RWPE1 (cell line): ENCODE measurements at regions of chr12 and their contacts with region 1.

Region 1: GRCh38 chr12:57452937-57453509 is 2.1 kb upstream of the INHBE start:
- DNase-seq: peak; percentile 53
- H3K27ac ChIP-seq: no peak overlapping the region
- CTCF ChIP-seq: peak; percentile 91

Region 2: GRCh38 chr12:57268264-57268663 is 184.8 kb before region 1 on chr12:
- CTCF ChIA-PET with region 1: interaction called, 19 read pairs
- POLR2A ChIA-PET with region 1: no interaction called
- DNase-seq: no peak
- H3K27ac ChIP-seq: no peak overlapping the region
- CTCF ChIP-seq: no peak

Region 3: GRCh38 chr12:57309420-57309819 is 143.6 kb before region 1 on chr12:
- CTCF ChIA-PET with region 1: interaction called, 18 read pairs
- POLR2A ChIA-PET with region 1: no interaction called
- DNase-seq: peak; percentile 34
- H3K27ac ChIP-seq: no peak overlapping the region
- CTCF ChIP-seq: no peak

Region 4: GRCh38 chr12:57441846-57442427 is 11.1 kb before region 1 on chr12:
- CTCF ChIA-PET with region 1: interaction called, 12 read pairs
- POLR2A ChIA-PET with region 1: no interaction called
- DNase-seq: no peak
- H3K27ac ChIP-seq: no peak overlapping the region
- CTCF ChIP-seq: no peak

Region 5: DNA sequence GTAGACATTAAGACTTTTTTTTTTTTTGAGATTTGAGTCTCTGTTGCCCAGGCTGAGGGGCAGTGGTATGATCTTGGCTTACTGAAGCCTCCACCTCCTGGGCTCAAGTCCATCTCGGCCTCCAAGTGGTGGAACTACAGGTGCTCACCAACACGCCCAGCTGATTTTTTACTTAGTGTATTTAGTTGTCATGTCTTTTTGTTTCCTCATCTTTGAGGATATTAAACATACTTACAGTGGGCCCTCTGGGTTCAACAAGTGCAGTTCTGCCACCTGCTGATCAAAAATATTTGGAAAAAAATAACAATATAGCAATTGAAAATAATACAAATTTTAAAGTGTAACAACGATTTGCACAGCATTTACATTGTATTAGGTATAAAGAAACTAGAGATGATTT is 184.3 kb after region 1 on chr12:
- CTCF ChIA-PET with region 1: no interaction called
- POLR2A ChIA-PET with region 1: no interaction called
- DNase-seq: no peak
- H3K27ac ChIP-seq: no peak overlapping the region
- CTCF ChIP-seq: no peak